Aorta (tissue), 5 donors: ENCODE measurements at regions of chrX and their contacts with region 1.

Region 1: DNA sequence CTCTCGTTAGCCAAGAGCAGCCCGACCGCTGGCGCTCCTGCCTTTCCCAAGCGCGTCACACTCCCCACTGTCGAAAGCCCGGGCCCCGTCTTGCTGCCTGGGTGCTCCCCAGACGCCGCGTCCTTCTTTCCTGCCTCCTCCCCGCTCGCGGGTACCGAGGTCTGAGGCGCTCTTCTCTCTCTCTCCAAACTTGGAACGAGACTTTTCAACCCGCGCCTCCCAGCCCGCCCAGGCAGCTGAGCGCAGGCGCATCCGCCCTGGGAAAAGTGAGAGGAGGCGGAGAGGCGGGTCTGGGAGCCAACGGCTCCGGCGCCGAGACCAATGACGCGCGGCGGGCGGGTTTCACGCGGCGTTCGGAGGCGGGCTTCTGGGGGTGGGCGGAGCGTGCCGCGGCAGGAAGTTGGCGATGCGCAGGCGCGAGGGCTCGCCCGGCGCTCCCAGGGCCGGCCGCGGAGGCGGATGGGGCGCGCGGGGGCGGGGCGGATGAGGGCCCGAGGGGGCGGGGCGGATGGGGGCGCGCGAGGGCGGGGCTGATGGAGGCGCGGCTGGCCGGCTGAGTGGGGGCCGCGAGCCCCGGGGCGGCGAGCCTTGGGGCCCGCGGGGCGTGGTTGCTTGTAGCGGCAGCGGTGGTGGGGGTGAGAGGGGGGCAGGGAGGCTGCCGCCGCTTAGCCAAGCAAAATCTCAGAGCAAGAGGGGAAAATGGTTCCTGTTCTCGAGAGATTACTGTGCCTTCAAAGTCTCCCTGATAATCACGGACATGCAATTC is at the start of gene RBBP7:
- DNase-seq: peak; percentile 97 to 98
- ATAC-seq: peak; percentile 97
- H3K4me3 ChIP-seq: peak within 1 kb of the TSS; percentile 87 to 92
- H3K27ac ChIP-seq: peak within 1 kb of the TSS; percentile 73 to 82
- H3K4me1 ChIP-seq: no peaks in the 10 kb centered on the region
- H3K27me3 ChIP-seq: no peaks in the 10 kb centered on the region
- total RNA-seq, gene RBBP7: 89.4 to 97.5 TPM

Region 2: GRCh38 chrX:16786139-16786790 is 84.0 kb before region 1 on chrX and contains the start of gene TXLNG:
- intact Hi-C with region 1: loop called in 1 of 2 experiments (anchors 2 kb)
- DNase-seq: peak; percentile 99 to 100
- ATAC-seq: peak; percentile 99
- H3K4me3 ChIP-seq: peak within 1 kb of the TSS; percentile 74 to 78
- H3K27ac ChIP-seq: peak within 1 kb of the TSS; percentile 17 to 55
- H3K4me1 ChIP-seq: no peaks in the 10 kb centered on the region
- H3K27me3 ChIP-seq: no peaks in the 10 kb centered on the region
- total RNA-seq, gene TXLNG: 9.4 to 11.8 TPM

Region 3: GRCh38 chrX:16807548-16807947 is 62.7 kb before region 1 on chrX:
- intact Hi-C with region 1: no loop called
- DNase-seq: no peak
- ATAC-seq: no peak
- H3K4me3 ChIP-seq: no peak overlapping the region
- H3K27ac ChIP-seq: no peak overlapping the region
- H3K4me1 ChIP-seq: no peaks in the 10 kb centered on the region
- H3K27me3 ChIP-seq: no peaks in the 10 kb centered on the region

Region 4: GRCh38 chrX:16826207-16826606 is 44.1 kb before region 1 on chrX:
- intact Hi-C with region 1: loop called in 1 of 2 experiments (anchors 5 kb)
- DNase-seq: no peak
- ATAC-seq: no peak
- H3K4me3 ChIP-seq: no peak overlapping the region
- H3K27ac ChIP-seq: no peak overlapping the region
- H3K4me1 ChIP-seq: peaks cover 0 to 5% of the 10 kb centered on the region in 2 donors
- H3K27me3 ChIP-seq: no peaks in the 10 kb centered on the region

Region 5: DNA sequence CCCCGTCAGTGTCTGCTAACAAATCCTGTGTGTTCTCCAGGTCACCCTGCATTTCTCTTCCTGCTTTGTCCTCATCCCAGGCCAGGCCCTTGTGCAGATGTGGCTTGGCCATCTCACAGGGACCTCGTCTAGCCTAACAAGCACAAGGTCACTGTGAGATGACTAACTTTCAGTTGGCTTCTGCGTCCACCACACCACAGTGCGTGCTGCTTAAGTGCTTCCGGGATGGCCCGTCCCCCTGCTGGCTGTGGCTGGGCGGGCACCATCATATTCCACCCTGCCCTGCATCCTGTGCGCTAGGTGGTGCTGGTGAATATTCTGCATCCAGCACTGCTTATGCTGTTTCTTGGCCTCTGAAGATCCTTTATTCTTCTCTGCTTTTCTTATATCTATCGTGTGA is 33.9 kb before region 1 on chrX:
- intact Hi-C with region 1: loop called in 1 of 2 experiments (anchors 5 kb)
- DNase-seq: no peak
- ATAC-seq: no peak
- H3K4me3 ChIP-seq: no peak overlapping the region
- H3K27ac ChIP-seq: no peak overlapping the region
- H3K4me1 ChIP-seq: no peaks in the 10 kb centered on the region
- H3K27me3 ChIP-seq: no peaks in the 10 kb centered on the region